ENCODE measurements at regions of chr14 and their contacts with region 1.

Region 1: DNA sequence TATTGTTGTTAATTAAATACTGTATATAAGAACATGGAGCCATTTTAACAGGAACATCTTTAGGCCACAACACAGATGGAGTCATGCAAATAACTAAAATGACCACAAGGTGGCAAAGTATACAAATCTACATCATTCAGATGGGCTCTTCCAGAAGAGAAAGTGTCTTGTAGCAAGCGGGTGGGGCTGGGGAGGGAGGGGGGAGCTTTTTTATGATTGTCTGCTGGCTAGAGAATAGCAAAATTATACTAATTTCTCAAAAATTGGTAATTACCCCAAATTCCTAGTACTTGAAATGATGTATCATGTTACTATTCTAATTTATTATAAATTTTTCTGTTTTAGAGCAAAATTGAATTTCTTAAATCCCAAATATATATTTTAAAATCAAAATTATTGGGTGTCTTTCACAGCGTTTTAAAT is 378.7 kb downstream of the PRKD1 start:
- DNase-seq: no peak
- H3K4me3 ChIP-seq: no peak overlapping the region
- H3K27ac ChIP-seq: no peak overlapping the region
- H3K4me1 ChIP-seq: no peaks in the 10 kb centered on the region
- H3K27me3 ChIP-seq: no peaks in the 10 kb centered on the region
- CTCF ChIP-seq: peak in 9 of 11 experiments; percentile 28 to 61 (median 58)
- POLR2A ChIP-seq: no peak

Region 2: DNA sequence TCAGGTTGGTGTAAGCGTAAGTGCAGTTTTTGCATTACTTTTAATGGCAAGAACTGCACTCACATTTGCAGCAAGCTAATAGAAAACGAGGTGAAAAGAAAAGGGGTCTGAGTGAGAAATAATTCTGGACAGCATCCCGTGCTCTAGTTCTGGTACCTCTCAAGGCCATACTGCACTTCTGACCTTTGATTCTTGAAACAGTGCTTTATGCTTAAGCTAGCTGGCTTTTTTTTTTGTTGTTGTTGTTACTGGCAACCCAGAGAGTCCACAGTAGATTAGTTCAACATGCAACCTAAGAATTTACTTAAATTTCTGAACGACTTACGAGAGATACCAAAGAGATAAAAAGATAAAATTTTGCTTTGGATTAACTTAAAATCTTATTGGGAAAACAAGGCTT is 453.9 kb after region 1 on chr14:
- intact Hi-C with region 1: loop called (anchors 5 kb)
- DNase-seq: no peak
- H3K4me3 ChIP-seq: no peak overlapping the region
- H3K27ac ChIP-seq: no peak overlapping the region
- H3K4me1 ChIP-seq: no peaks in the 10 kb centered on the region
- H3K27me3 ChIP-seq: no peaks in the 10 kb centered on the region
- CTCF ChIP-seq: no peak
- POLR2A ChIP-seq: no peak

Region 3: GRCh38 chr14:30214461-30215090 is 665.6 kb after region 1 on chr14:
- intact Hi-C with region 1: loop called (anchors 10 kb)
- DNase-seq: no peak
- H3K4me3 ChIP-seq: no peak overlapping the region
- H3K27ac ChIP-seq: no peak overlapping the region
- H3K4me1 ChIP-seq: no peaks in the 10 kb centered on the region
- H3K27me3 ChIP-seq: no peaks in the 10 kb centered on the region
- CTCF ChIP-seq: peak in 6 of 11 experiments; percentile 23 to 40 (median 32)
- POLR2A ChIP-seq: no peak

Measured in spleen (tissue), 13 donors.